Activated CD8-positive, alpha-beta T cell treated with anti-CD3 and anti-CD28 coated beads for 36 hours (primary cell): ENCODE measurements at regions of chr7 and their contacts with region 1.

Region 1: DNA sequence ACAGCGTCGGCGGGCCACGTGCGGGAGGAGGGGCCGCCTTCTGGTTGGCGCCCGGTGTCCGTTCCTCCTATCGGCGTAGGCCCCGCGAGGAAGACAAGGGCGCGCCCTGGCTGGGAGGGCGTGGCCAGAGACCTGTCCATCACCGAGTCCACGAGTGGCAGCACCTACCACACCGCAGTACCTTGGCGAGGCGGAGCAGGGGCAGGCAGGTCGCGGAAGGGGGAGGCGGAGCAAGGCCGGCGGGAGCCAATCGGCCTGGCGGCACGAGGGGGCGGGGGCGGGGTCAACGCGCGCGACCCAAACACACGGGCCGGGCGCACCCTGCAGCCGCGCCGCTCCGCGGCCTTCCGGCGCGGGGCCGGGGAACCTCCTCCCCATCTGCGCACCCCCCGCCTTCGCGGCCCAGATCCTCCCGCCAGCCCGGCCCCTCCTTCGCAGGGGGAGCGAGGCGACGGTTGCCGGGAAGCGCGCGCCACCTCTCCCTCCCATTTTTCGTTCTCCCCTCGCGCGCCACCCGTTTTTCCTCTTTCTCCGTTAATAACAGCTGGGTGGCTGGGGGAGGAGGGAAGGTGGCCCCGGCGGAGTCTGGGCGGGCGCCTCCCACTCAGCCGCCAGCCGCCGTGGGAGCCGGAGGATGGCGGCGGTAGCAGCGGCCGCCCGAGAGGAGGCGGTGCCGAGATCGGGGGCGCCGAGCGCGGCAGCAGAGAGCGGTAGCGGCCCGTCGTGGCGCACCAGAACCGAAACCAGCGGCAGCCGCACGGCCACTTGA is at the start of gene ZNRF2:
- DNase-seq: peak; percentile 99
- ATAC-seq: peak; percentile 90
- H3K4me3 Mint-ChIP-seq: peak within 1 kb of the TSS; percentile 77
- H3K27ac Mint-ChIP-seq: peak within 1 kb of the TSS; percentile 87
- H3K4me1 Mint-ChIP-seq: peaks cover 39% of the 10 kb centered on the region
- H3K27me3 Mint-ChIP-seq: no peaks in the 10 kb centered on the region
- CTCF ChIP-seq: peak; percentile 30
- total RNA-seq, gene ZNRF2: 8.9 to 9.7 TPM

Region 2: DNA sequence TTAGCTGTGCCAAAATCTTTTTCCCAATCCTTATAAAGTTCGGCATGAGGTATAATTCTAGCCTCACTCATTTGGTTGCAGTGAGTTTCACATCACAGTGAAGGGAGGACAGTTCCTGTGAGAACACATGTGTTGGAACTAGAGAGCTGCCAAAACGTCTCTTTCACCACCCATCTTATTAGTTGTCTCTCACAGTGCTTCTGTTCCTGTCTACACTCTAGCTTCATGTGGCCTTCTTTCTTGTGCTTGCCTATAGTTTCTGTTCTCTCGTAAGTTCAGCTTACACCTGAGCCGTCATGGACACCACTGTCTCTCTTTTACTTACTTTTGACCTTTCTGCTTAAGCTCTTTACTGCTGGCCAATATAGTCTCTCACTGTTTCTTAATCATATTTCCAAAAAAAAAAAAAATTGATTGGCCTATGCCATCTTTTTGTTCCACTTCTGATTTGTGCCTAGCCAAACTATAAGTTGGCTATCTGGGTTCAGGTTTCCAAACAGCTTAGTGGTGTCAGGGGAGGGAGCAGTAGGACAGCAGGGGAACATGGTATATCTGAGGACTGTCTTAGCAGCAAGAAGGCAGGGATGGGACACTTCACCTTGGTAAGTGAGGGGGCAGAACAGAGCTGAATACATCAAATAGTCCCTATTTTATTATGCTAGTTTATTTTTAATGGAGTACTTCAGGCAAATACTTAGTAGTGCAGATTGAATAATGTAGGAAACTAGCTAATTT is 38.0 kb after region 1 on chr7:
- CTCF ChIA-PET with region 1: interaction called, 7 read pairs
- POLR2A ChIA-PET with region 1: interaction called, 12 read pairs
- intact Hi-C with region 1: loop called (anchors 5 kb)
- DNase-seq: peak; percentile 17
- ATAC-seq: peak; percentile 62
- H3K4me3 Mint-ChIP-seq: peak overlapping the region; percentile 72
- H3K27ac Mint-ChIP-seq: peak overlapping the region; percentile 96
- H3K4me1 Mint-ChIP-seq: peaks cover 60% of the 10 kb centered on the region
- H3K27me3 Mint-ChIP-seq: no peaks in the 10 kb centered on the region
- CTCF ChIP-seq: no peak

Region 3: DNA sequence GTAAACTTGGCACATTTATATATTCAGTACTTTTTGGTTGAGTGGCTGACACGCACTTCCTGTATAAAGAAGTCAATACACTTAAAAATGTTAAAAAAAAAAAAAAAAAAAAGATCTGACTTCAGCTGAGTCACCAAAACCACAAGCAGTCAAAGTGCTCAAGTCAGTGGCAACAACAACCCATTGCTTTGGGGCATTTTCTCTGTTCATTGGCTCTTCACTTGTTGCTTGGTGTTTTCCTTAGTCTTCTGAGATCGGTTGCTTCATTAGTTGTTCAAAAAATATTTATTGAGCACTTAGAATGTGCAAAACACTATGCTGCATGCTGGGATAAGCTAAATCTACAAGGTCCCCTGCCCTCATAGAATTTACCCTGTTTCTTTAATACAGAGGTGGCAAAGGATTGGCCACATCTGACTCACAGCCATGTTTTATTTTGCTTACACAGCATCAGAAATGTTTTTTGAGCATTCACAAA is 63.6 kb after region 1 on chr7:
- CTCF ChIA-PET with region 1: interaction called, 96 read pairs
- POLR2A ChIA-PET with region 1: interaction called, 14 read pairs
- intact Hi-C with region 1: loop called (anchors 2 kb)
- DNase-seq: peak; percentile 62
- ATAC-seq: peak; percentile 86
- H3K4me3 Mint-ChIP-seq: peak overlapping the region; percentile 78
- H3K27ac Mint-ChIP-seq: peak overlapping the region; percentile 97
- H3K4me1 Mint-ChIP-seq: peaks cover 59% of the 10 kb centered on the region
- H3K27me3 Mint-ChIP-seq: no peaks in the 10 kb centered on the region
- CTCF ChIP-seq: no peak

Region 4: GRCh38 chr7:30478349-30479201 is 194.1 kb after region 1 on chr7 and contains the start of gene NOD1:
- CTCF ChIA-PET with region 1: interaction called, 4 read pairs
- POLR2A ChIA-PET with region 1: no interaction called
- intact Hi-C with region 1: loop called (anchors 10 kb)
- DNase-seq: peak; percentile 73
- ATAC-seq: peak; percentile 89
- H3K4me3 Mint-ChIP-seq: peak within 1 kb of the TSS; percentile 93
- H3K27ac Mint-ChIP-seq: peak within 1 kb of the TSS; percentile 91
- H3K4me1 Mint-ChIP-seq: peaks cover 54% of the 10 kb centered on the region
- H3K27me3 Mint-ChIP-seq: no peaks in the 10 kb centered on the region
- CTCF ChIP-seq: peak; percentile 22
- total RNA-seq, gene NOD1: 11.5 to 12.5 TPM